ENCODE measurements at regions of chr5 and their contacts with region 1.

Region 1: GRCh38 chr5:157948738-157949410 is 89.9 kb upstream of the CLINT1 start:
- DNase-seq: peak; percentile 41 to 84 (median 71)
- ATAC-seq: peak; percentile 83 to 98 (median 96)
- H3K4me3 ChIP-seq: no peak overlapping the region
- H3K4me3 Mint-ChIP-seq: no peak overlapping the region
- H3K27ac ChIP-seq: no peak overlapping the region
- H3K27ac Mint-ChIP-seq: no peak overlapping the region
- H3K4me1 ChIP-seq: peaks cover 0 to 5% of the 10 kb centered on the region in 2 experiments
- H3K4me1 Mint-ChIP-seq: peaks cover 4 to 7% (median 5%) of the 10 kb centered on the region in 3 donors
- H3K27me3 ChIP-seq: peaks cover 0 to 21% of the 10 kb centered on the region in 2 experiments
- H3K27me3 Mint-ChIP-seq: peaks cover 4 to 13% of the 10 kb centered on the region in 2 donors

Region 2: GRCh38 chr5:157812086-157812485 is 136.8 kb before region 1 on chr5:
- CTCF ChIA-PET with region 1: interaction called, 30 to 57 read pairs
- POLR2A ChIA-PET with region 1: no interaction called
- DNase-seq: no peak
- ATAC-seq: no peak
- H3K4me3 ChIP-seq: no peak overlapping the region
- H3K4me3 Mint-ChIP-seq: no peak overlapping the region
- H3K27ac ChIP-seq: no peak overlapping the region
- H3K27ac Mint-ChIP-seq: no peak overlapping the region
- H3K4me1 ChIP-seq: no peaks in the 10 kb centered on the region
- H3K4me1 Mint-ChIP-seq: no peaks in the 10 kb centered on the region
- H3K27me3 ChIP-seq: no peaks in the 10 kb centered on the region
- H3K27me3 Mint-ChIP-seq: no peaks in the 10 kb centered on the region

Region 3: GRCh38 chr5:157820593-157821252 is 128.2 kb before region 1 on chr5:
- CTCF ChIA-PET with region 1: interaction called, 30 to 57 read pairs
- POLR2A ChIA-PET with region 1: no interaction called
- DNase-seq: peak in 10 of 35 experiments; percentile 3 to 60 (median 22)
- ATAC-seq: no peak
- H3K4me3 ChIP-seq: no peak overlapping the region
- H3K4me3 Mint-ChIP-seq: no peak overlapping the region
- H3K27ac ChIP-seq: no peak overlapping the region
- H3K27ac Mint-ChIP-seq: peak overlapping the region; percentile 64 to 72
- H3K4me1 ChIP-seq: no peaks in the 10 kb centered on the region
- H3K4me1 Mint-ChIP-seq: peaks cover 34 to 46% (median 43%) of the 10 kb centered on the region in 3 donors
- H3K27me3 ChIP-seq: no peaks in the 10 kb centered on the region
- H3K27me3 Mint-ChIP-seq: no peaks in the 10 kb centered on the region

Region 4: DNA sequence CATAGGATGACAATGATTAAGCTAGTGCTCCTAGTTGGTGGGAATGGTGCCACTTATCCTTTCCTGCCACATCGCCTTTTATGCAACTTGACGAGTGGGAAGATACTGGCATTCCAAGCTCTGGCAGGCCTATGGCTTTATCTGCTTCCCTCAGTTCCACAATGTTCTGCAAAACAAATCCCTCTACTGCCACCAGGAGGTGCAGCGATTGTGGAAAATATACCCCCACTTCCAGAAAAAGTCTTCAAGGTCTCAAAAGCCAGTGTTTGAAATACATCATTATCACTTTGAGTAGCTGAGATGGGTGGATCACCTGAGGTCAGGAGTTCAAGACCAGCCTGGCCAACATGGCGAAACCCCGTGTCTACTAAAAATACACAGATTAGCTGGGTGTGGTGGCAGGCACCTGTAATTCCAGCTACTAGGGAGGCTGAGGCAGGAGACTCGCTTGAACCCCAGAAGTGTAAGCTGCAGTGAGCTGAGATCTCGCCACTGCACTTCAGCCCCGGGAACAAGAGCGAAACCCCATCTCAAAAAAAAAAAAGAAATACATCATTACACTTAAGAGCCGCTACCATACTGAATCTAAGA is 93.4 kb before region 1 on chr5:
- CTCF ChIA-PET with region 1: interaction called, 5 to 8 read pairs
- POLR2A ChIA-PET with region 1: interaction called, 4 to 10 read pairs
- DNase-seq: peak in 9 of 35 experiments; percentile 3 to 35 (median 11)
- ATAC-seq: no peak
- H3K4me3 ChIP-seq: no peak overlapping the region
- H3K4me3 Mint-ChIP-seq: peak overlapping the region in 2 of 3 donors; percentile 14 to 38
- H3K27ac ChIP-seq: no peak overlapping the region
- H3K27ac Mint-ChIP-seq: peak overlapping the region in 1 of 2 donors; percentile 7
- H3K4me1 ChIP-seq: peaks cover 17 to 28% of the 10 kb centered on the region in 2 experiments
- H3K4me1 Mint-ChIP-seq: peaks cover 70 to 73% (median 72%) of the 10 kb centered on the region in 3 donors
- H3K27me3 ChIP-seq: no peaks in the 10 kb centered on the region
- H3K27me3 Mint-ChIP-seq: no peaks in the 10 kb centered on the region

Region 5: GRCh38 chr5:157870837-157871834 is 77.7 kb before region 1 on chr5:
- CTCF ChIA-PET with region 1: no interaction called
- POLR2A ChIA-PET with region 1: no interaction called
- DNase-seq: no peak
- ATAC-seq: no peak
- H3K4me3 ChIP-seq: no peak overlapping the region
- H3K4me3 Mint-ChIP-seq: no peak overlapping the region
- H3K27ac ChIP-seq: no peak overlapping the region
- H3K27ac Mint-ChIP-seq: no peak overlapping the region
- H3K4me1 ChIP-seq: no peaks in the 10 kb centered on the region
- H3K4me1 Mint-ChIP-seq: no peaks in the 10 kb centered on the region
- H3K27me3 ChIP-seq: peaks cover 0 to 5% of the 10 kb centered on the region in 2 experiments
- H3K27me3 Mint-ChIP-seq: no peaks in the 10 kb centered on the region

Region 6: DNA sequence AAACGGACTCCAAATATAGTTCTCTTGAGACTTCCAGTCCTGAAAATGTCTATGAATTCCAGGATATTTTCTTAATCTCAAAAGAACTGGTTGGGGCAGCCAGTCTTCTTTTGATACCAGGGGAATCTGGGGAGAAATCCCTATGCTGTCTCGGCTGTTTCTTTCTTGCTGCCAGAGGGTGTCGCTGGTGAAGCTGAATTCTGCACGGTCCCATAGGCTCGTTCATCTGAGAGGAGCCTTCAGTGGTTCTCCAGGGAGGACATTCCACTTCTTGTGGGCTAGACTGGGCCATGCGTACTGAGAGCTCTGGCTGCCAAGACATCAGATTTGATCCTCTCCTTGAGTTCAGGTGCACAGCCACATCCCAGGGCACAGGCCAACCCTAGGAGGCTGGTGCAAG is 65.1 kb after region 1 on chr5:
- CTCF ChIA-PET with region 1: no interaction called
- POLR2A ChIA-PET with region 1: no interaction called
- DNase-seq: no peak
- ATAC-seq: no peak
- H3K4me3 ChIP-seq: no peak overlapping the region
- H3K4me3 Mint-ChIP-seq: no peak overlapping the region
- H3K27ac ChIP-seq: no peak overlapping the region
- H3K27ac Mint-ChIP-seq: no peak overlapping the region
- H3K4me1 ChIP-seq: no peaks in the 10 kb centered on the region
- H3K4me1 Mint-ChIP-seq: no peaks in the 10 kb centered on the region
- H3K27me3 ChIP-seq: peaks cover 0 to 4% of the 10 kb centered on the region in 2 experiments
- H3K27me3 Mint-ChIP-seq: peaks cover 19 to 27% of the 10 kb centered on the region in 2 donors